ENCODE measurements at regions of chr3 and their contacts with region 1.

Region 1: DNA sequence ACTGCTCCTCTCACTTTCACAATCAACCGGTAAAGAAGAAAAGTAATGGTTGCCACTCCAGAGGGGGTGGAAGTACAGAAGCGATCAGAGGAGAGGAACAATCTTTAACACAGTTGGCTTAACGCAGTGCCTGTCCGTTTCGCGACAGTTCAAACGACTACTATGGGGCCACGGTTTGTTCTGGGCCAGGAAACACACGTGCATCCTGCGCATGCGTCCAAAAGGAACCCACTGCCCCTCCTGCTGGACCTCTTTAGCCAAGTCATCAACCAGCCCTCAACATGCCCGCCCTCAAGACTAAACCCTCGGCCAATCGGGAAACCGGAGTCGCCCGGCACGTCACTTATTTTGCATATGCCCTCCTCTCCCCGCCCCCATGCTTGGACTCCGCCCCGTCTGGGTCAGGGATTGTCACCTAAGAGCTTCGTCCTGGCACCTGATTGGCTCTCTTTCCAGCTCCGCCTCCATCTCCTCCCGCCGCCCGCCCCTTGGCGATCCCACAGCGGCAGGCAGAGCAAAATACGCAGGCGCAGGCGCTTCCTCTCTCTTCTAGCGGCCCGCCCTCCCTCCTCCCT is 345 bp upstream of the CDV3 start:
- DNase-seq: peak; percentile 99
- ATAC-seq: peak; percentile 83
- H3K4me3 ChIP-seq: peak overlapping the region; percentile 73
- H3K27ac ChIP-seq: peak overlapping the region; percentile 97
- H3K4me1 ChIP-seq: peaks cover 18% of the 10 kb centered on the region
- H3K27me3 ChIP-seq: no peaks in the 10 kb centered on the region
- CTCF ChIP-seq: peak in 2 of 3 experiments; percentile 3 to 14; a peak in 2 of 6 replicates
- EP300 ChIP-seq: no peak
- POLR2A ChIP-seq: no peak; the same call in 1 of the 2 replicates
- RAD21 ChIP-seq: no peak

Region 2: GRCh38 chr3:133457465-133458067 is 115.6 kb before region 1 on chr3:
- CTCF ChIA-PET with region 1: interaction called, 29 read pairs
- POLR2A ChIA-PET with region 1: interaction called, 17 read pairs
- RAD21 ChIA-PET with region 1: interaction called, 137 read pairs
- SMC1A ChIA-PET with region 1: interaction called, 92 read pairs
- in situ Hi-C with region 1: no loop called
- intact Hi-C with region 1: no loop called
- DNase-seq: no peak
- ATAC-seq: peak; percentile 64
- H3K4me3 ChIP-seq: no peak overlapping the region
- H3K27ac ChIP-seq: no peak overlapping the region
- H3K4me1 ChIP-seq: peaks cover 3% of the 10 kb centered on the region; the same call in 1 of the 2 replicates
- H3K27me3 ChIP-seq: no peaks in the 10 kb centered on the region
- CTCF ChIP-seq: peak; percentile 3 to 41 (median 24); a peak in 2 of 6 replicates
- EP300 ChIP-seq: no peak
- POLR2A ChIP-seq: no peak
- RAD21 ChIP-seq: peak; percentile 47

Region 3: GRCh38 chr3:133464573-133464972 is 108.6 kb before region 1 on chr3:
- CTCF ChIA-PET with region 1: interaction called, 36 read pairs
- POLR2A ChIA-PET with region 1: interaction called, 17 read pairs
- RAD21 ChIA-PET with region 1: interaction called, 137 read pairs
- SMC1A ChIA-PET with region 1: interaction called, 70 read pairs
- in situ Hi-C with region 1: no loop called
- intact Hi-C with region 1: loop called (anchors 2 kb)
- DNase-seq: no peak
- ATAC-seq: peak; percentile 65
- H3K4me3 ChIP-seq: no peak overlapping the region
- H3K27ac ChIP-seq: peak overlapping the region; percentile 4; the same call in 1 of the 2 replicates
- H3K4me1 ChIP-seq: peaks cover 58% of the 10 kb centered on the region
- H3K27me3 ChIP-seq: no peaks in the 10 kb centered on the region
- CTCF ChIP-seq: peak; percentile 22 to 32 (median 23); a peak in 3 of 6 replicates
- EP300 ChIP-seq: no peak
- POLR2A ChIP-seq: no peak
- RAD21 ChIP-seq: peak; percentile 58

Region 4: GRCh38 chr3:133487920-133488540 is 85.1 kb before region 1 on chr3:
- CTCF ChIA-PET with region 1: interaction called, 86 read pairs
- POLR2A ChIA-PET with region 1: interaction called, 5 read pairs
- RAD21 ChIA-PET with region 1: interaction called, 33 read pairs
- SMC1A ChIA-PET with region 1: interaction called, 42 read pairs
- in situ Hi-C with region 1: loop called (anchors 5 kb)
- intact Hi-C with region 1: loop called (anchors 2 kb)
- DNase-seq: no peak
- ATAC-seq: no peak
- H3K4me3 ChIP-seq: no peak overlapping the region; the same call in 1 of the 2 replicates
- H3K27ac ChIP-seq: no peak overlapping the region
- H3K4me1 ChIP-seq: peaks cover 48% of the 10 kb centered on the region
- H3K27me3 ChIP-seq: no peaks in the 10 kb centered on the region
- CTCF ChIP-seq: peak; percentile 26 to 36 (median 35); a peak in 3 of 6 replicates
- EP300 ChIP-seq: no peak
- POLR2A ChIP-seq: no peak
- RAD21 ChIP-seq: peak; percentile 57

Region 5: DNA sequence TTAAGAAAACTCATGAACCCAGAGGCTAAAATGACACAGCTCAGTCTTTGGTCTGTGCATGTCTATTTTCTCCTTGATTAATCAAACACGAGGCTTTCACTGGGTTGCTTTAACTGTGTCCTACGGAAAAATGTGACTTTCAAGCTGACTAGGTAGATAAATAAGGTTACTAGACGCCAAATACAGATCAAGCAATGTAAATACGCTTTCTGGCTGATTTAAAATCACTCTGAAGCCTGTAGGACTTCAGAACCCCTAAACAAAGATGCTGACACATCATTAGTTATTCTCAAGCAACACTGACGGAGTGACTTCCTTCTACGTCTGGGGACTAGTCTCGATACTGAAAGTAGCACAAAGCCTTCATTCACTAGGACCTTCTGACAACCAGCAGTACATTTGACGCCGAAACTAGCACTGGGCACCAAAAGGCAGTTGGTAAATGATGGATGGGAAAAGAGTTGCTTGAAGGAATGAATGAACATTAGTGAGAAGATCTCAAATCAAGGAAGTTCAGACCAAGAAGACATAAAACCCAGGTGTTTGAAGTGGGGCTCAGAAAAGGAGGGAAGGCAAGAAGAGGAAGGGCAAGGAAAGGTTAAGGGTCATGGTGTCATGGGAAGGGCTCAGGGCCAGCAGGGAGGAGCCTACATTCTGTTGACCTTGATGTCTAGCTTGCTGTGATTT is 66.8 kb before region 1 on chr3:
- CTCF ChIA-PET with region 1: interaction called, 8 read pairs
- POLR2A ChIA-PET with region 1: interaction called, 16 read pairs
- RAD21 ChIA-PET with region 1: interaction called, 5 read pairs
- SMC1A ChIA-PET with region 1: interaction called, 23 read pairs
- in situ Hi-C with region 1: no loop called
- intact Hi-C with region 1: no loop called
- DNase-seq: peak; percentile 93
- ATAC-seq: peak; percentile 98
- H3K4me3 ChIP-seq: peak overlapping the region; percentile 43; the same call in 1 of the 2 replicates
- H3K27ac ChIP-seq: peak overlapping the region; percentile 97
- H3K4me1 ChIP-seq: peaks cover 18% of the 10 kb centered on the region
- H3K27me3 ChIP-seq: no peaks in the 10 kb centered on the region
- CTCF ChIP-seq: no peak
- EP300 ChIP-seq: peak in 1 of 2 experiments; percentile 61; a peak in 3 of 4 replicates
- POLR2A ChIP-seq: peak; percentile 49; the same call in 1 of the 2 replicates
- RAD21 ChIP-seq: 0 out of 2 replicates have a peak, but pooled peaks have one; percentile 17

Region 6: DNA sequence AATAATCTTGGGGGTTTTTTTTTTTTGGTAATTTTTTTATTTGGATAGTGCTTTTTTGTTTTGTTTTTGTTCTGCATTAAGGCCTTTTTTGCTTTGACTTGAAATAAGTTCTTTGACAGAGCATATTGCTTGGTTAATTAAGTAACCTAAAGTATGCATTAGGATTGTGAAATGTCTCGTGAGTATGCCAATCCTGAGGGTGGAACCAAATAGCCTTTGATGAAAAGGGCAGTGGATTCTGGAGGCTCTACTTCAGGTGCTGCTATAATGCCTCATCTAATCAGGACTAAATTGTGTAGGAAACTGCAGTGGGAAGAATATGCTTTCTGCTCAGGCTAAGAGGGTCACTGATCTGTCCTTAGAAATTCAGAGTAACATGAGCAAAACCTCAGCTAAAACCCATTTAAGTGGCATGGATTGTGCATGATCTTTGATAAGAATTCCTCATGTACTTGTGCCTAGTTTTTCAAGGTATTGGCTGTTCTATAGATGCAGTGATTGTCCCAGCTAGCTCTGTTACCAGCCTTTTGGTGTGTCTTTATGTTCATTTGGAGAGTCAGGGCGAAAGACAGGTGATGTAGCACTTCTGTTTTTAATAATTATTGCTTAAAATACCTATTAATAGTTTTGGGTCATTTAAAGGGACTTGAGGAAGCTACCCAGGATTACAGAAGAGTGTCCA is 15.8 kb after region 1 on chr3:
- CTCF ChIA-PET with region 1: interaction called, 8 read pairs
- POLR2A ChIA-PET with region 1: interaction called, 8 read pairs
- RAD21 ChIA-PET with region 1: interaction called, 4 read pairs
- SMC1A ChIA-PET with region 1: interaction called, 38 read pairs
- in situ Hi-C with region 1: no loop called
- intact Hi-C with region 1: no loop called
- DNase-seq: no peak
- ATAC-seq: peak; percentile 11; the same call in 1 of the 3 replicates
- H3K4me3 ChIP-seq: no peak overlapping the region
- H3K27ac ChIP-seq: no peak overlapping the region
- H3K4me1 ChIP-seq: peaks cover 26% of the 10 kb centered on the region
- H3K27me3 ChIP-seq: no peaks in the 10 kb centered on the region
- CTCF ChIP-seq: no peak
- EP300 ChIP-seq: no peak
- POLR2A ChIP-seq: no peak
- RAD21 ChIP-seq: no peak

Measured in GM12878 (cell line).